ENCODE measurements at regions of chr1 and their contacts with region 1.

Region 1: GRCh38 chr1:29688471-29689365 is 452.4 kb downstream of the PTPRU start:
- DNase-seq: peak; percentile 54
- CTCF ChIP-seq: no peak

Region 2: DNA sequence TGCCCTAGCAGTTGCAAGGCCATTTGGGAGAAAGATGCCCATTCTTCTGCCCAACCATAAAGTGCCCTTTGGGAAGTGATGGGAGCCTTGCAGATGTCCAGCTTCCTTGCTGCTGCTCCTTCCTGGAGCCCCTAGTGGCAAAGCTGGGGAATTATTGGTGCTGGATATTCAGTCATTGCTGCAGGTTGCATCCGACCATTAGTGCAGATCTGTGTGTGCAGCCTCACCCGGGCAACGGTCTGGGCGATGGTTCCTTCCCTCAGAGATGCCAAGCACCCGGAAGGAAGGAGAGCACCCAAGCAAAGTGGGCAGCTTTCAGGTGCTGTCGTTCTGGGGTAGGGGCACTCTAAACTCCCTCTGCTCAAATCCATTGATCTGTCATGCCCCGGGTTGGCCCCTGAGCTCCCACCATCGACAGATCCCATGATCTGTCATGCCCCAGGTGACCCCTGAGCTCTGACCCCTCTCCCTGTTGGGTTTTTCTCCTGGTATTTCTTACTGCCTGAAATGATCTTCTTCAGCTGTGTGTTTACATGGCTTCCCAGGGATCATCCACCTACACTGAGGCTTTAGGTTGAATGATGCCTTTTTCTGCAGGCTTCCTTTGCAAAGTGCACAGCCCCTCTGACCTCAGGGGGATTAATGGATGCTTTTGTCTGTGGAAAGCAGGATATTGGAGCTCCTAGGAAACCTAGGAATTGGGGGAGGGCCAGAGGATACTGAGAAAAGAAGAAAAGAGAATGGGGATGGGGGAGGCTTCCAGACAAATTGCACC is 15.1 kb after region 1 on chr1:
- CTCF ChIA-PET with region 1: interaction called, 50 read pairs
- POLR2A ChIA-PET with region 1: no interaction called
- DNase-seq: peak; percentile 43
- CTCF ChIP-seq: peak; percentile 57

Region 3: DNA sequence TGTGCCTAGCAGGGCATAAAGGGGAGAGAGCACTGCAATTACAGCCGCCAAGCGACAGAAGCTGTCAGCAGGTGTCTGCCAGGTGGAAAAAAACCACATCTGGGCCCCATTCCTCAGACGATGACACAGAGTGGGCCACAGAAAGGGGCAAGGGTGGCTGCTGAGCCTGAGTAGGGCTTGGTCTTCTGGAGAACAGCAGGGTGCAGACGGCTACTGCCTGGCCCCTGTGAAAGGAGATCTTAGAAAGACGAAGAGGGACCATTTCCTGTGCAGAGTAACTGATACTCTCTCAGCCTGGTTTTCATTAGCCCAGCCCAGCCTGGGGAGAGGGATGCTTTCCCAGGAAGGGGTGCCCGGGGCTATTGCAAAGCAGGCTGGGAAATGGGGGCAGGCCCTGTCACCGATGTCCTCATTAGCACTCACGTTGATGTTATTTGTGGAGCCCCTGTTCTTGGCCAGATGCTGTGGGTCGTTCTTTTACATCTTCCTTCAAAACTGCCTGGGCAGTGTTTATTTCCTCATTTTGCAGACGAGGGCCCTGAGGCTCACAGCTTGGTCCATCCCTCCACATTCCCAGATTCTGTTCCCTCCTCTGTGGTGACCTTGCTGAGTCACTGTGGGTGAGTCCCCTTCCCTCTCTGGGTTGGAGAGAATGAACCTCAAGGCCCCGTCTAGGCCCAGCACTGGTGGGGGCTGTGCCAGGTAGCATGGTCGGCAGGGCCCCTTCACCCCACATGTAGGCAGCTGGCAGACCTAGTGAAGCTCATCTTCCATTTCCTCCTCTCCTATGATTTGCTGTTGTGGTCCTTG is 20.4 kb after region 1 on chr1:
- CTCF ChIA-PET with region 1: interaction called, 50 read pairs
- POLR2A ChIA-PET with region 1: no interaction called
- DNase-seq: no peak
- CTCF ChIP-seq: no peak